Mammary epithelial cell (primary cell): ENCODE measurements at regions of chr2 and their contacts with region 1.

Region 1: GRCh38 chr2:191202881-191203397 is 42.3 kb upstream of the MYO1B start:
- DNase-seq: peak; percentile 71
- H3K4me3 ChIP-seq: no peak overlapping the region
- H3K27ac ChIP-seq: peak overlapping the region; percentile 100
- H3K4me1 ChIP-seq: peaks cover 18% of the 10 kb centered on the region
- H3K27me3 ChIP-seq: no peaks in the 10 kb centered on the region
- CTCF ChIP-seq: no peak

Region 2: DNA sequence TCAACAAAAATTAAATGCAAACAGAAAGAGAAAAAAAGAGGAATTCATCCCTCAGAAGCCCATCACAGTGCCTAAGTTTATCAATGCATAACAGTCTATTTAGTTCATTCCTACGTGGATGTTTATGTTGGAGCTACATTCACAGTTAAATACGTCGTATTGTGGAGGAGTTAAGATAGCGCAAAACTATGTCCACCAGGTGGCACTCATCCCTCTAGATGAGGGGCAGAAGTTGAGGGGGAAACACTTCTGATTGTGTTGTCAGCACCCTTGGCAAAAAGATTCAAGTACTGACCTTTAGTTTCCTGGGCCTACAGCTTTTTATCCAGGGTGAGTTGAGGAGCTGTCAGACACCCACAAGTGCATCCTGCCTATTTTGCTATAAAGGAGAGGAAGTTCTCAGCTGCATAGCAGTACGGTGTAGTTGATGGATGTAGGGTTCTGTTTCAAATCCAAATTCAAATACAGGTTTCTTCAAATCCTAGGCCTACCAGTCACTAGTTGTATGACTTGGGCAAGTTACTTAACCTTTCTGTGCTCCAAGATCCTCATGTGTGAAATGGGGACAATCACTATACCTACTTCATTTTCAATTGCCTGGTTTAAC is 15.5 kb after region 1 on chr2:
- CTCF ChIA-PET with region 1: no interaction called
- dilution Hi-C with region 1: no loop called
- in situ Hi-C with region 1: no loop called
- intact Hi-C with region 1: loop called (anchors 1 kb)
- DNase-seq: peak; percentile 46
- H3K4me3 ChIP-seq: no peak overlapping the region
- H3K27ac ChIP-seq: peak overlapping the region; percentile 88
- H3K4me1 ChIP-seq: peaks cover 52% of the 10 kb centered on the region
- H3K27me3 ChIP-seq: no peaks in the 10 kb centered on the region
- CTCF ChIP-seq: peak; percentile 62 to 64